CD8-positive, alpha-beta memory T cell (primary cell): ENCODE measurements at regions of chr19 and their contacts with region 1.

Region 1: DNA sequence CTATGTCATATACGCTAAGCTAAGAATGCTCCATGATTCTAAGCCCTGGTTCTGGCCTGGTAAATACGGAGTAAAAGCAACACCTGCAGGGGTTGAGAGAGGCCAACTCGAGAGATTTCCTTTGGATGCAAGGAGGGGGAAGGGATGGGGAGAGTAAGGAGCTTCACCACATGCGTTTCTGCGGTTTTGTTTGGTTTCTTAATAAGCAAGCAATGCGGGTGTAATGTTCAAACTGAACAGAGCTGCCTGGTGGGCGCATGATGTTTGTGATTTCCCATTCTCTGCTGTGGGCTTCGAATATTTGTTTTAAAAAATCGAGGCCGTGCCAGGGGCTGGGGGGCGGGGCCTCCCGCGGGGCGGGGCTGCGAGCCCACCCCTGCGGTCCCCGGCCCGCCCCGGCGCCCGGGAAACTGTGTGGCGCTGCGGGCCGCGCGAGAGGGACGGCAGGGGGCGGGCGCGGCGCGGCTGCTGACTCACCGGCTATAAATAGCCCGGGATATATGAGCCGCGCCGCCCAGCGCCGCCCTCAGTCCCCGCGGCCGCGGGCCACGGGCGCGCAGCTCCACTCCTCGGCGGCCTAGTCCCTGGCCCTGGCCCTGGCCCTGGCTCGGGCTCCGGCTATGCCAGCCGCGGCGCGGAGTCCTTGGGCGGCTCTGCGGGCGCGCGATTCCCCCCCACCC is 5.1 kb downstream of the BBC3 start:
- DNase-seq: peak; percentile 85 to 92 (median 86)
- H3K4me3 ChIP-seq: peak overlapping the region; percentile 74
- H3K4me3 Mint-ChIP-seq: peak overlapping the region; percentile 11 to 92 (median 62)
- H3K27ac ChIP-seq: peak overlapping the region; percentile 94
- H3K27ac Mint-ChIP-seq: peak overlapping the region; percentile 71 to 95 (median 90)
- H3K4me1 ChIP-seq: peaks cover 36% of the 10 kb centered on the region
- H3K4me1 Mint-ChIP-seq: peaks cover 6 to 20% (median 16%) of the 10 kb centered on the region in 3 donors
- H3K27me3 ChIP-seq: no peaks in the 10 kb centered on the region
- H3K27me3 Mint-ChIP-seq: no peaks in the 10 kb centered on the region

Region 2: GRCh38 chr19:47152224-47153017 is 73.5 kb before region 1 on chr19:
- CTCF ChIA-PET with region 1: interaction called, 13 read pairs
- POLR2A ChIA-PET with region 1: interaction called, 11 read pairs
- DNase-seq: no peak
- H3K4me3 ChIP-seq: no peak overlapping the region
- H3K4me3 Mint-ChIP-seq: no peak overlapping the region
- H3K27ac ChIP-seq: no peak overlapping the region
- H3K27ac Mint-ChIP-seq: peak overlapping the region in 2 of 8 donors; percentile 58 to 69
- H3K4me1 ChIP-seq: peaks cover 39% of the 10 kb centered on the region
- H3K4me1 Mint-ChIP-seq: peaks cover 28 to 57% (median 51%) of the 10 kb centered on the region in 3 donors
- H3K27me3 ChIP-seq: no peaks in the 10 kb centered on the region
- H3K27me3 Mint-ChIP-seq: no peaks in the 10 kb centered on the region

Region 3: DNA sequence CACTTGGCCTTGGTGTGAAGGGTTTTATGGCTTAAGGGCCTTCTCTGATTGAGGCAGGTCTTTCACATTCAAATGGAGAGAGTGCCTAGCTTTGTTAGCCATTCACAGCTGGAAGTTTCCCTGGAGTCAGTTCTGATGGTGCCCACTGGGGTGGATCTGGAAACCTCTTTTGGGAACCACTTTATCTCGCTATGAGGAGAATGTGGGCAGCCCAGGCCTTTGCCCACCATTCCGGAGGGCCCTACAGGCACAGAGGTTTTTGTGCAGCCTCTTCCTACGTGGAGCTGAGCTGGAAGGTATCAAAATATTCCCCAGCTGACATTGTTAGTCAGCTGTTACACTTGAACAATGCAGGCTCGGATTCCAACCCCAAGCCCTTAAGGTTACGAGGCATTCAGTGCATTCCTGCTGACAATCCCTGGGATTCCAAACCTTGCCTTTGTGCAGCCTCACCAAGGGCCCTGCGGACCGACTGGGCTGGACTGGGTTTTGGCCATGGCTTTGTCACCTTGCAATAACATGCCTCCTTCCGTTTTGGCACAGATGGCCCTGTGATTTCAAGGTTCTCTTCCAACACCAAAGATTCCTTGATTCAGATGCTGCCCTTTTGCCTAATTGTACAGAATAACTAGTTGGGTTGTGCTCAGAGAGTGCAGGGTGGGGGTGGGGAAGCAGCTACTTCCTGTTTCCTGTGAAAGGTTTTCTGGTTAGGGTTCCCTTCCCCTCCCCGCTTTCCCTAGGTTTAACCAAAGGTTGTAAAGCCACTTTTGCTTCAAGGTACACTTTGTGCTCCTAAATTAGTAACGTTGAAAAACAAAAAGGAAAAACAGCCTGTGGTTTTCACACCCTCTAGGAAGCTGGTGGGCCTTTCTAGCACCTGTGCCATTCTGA is 68.2 kb before region 1 on chr19:
- CTCF ChIA-PET with region 1: interaction called, 3 read pairs
- POLR2A ChIA-PET with region 1: interaction called, 11 read pairs
- DNase-seq: peak in 3 of 5 donors; percentile 21 to 59 (median 45)
- H3K4me3 ChIP-seq: peak overlapping the region; percentile 48
- H3K4me3 Mint-ChIP-seq: peak overlapping the region; percentile 62 to 84 (median 80)
- H3K27ac ChIP-seq: peak overlapping the region; percentile 2
- H3K27ac Mint-ChIP-seq: peak overlapping the region; percentile 73 to 98 (median 93)
- H3K4me1 ChIP-seq: peaks cover 69% of the 10 kb centered on the region
- H3K4me1 Mint-ChIP-seq: peaks cover 50 to 78% (median 68%) of the 10 kb centered on the region in 3 donors
- H3K27me3 ChIP-seq: no peaks in the 10 kb centered on the region
- H3K27me3 Mint-ChIP-seq: no peaks in the 10 kb centered on the region

Region 4: DNA sequence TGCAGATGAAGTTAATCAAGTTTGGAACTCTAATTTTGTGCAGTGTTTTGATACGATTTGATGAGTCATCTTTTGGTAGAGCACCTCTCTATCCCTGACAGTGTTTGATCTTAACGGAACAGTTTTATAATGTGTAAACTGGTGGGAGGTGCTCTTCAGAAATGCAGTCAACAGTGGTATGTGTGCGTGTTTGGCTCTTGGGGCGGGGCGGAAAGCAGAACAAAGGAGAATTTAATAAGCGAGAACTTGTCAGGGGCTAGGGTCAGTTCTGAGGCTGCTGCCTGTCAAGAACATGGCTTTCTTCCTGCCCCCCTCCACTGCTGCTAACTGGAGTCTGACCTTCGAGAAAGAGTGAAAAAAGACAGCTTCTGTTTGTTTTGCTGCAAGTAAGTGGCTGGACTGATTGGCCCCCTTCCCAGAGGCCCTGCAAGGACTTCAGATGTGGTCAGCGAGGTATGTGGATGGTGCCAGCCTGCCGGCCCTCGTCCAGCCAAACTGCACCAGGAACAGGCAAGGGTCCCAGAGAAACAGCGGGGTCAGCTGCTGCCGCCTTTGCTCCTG is 35.6 kb before region 1 on chr19:
- CTCF ChIA-PET with region 1: interaction called, 12 read pairs
- POLR2A ChIA-PET with region 1: interaction called, 21 read pairs
- DNase-seq: peak in 3 of 5 donors; percentile 39 to 67 (median 67)
- H3K4me3 ChIP-seq: no peak overlapping the region
- H3K4me3 Mint-ChIP-seq: peak overlapping the region; percentile 2 to 55 (median 33)
- H3K27ac ChIP-seq: no peak overlapping the region
- H3K27ac Mint-ChIP-seq: peak overlapping the region; percentile 48 to 91 (median 70)
- H3K4me1 ChIP-seq: peaks cover 72% of the 10 kb centered on the region
- H3K4me1 Mint-ChIP-seq: peaks cover 41 to 69% (median 55%) of the 10 kb centered on the region in 3 donors
- H3K27me3 ChIP-seq: no peaks in the 10 kb centered on the region
- H3K27me3 Mint-ChIP-seq: no peaks in the 10 kb centered on the region

Region 5: GRCh38 chr19:47210689-47211316 is 15.1 kb before region 1 on chr19:
- CTCF ChIA-PET with region 1: interaction called, 33 read pairs
- POLR2A ChIA-PET with region 1: interaction called, 21 read pairs
- DNase-seq: peak; percentile 66 to 83 (median 73)
- H3K4me3 ChIP-seq: no peak overlapping the region
- H3K4me3 Mint-ChIP-seq: no peak overlapping the region
- H3K27ac ChIP-seq: peak overlapping the region; percentile 53
- H3K27ac Mint-ChIP-seq: peak overlapping the region in 7 of 8 donors; percentile 20 to 82 (median 55)
- H3K4me1 ChIP-seq: peaks cover 11% of the 10 kb centered on the region
- H3K4me1 Mint-ChIP-seq: peaks cover 6 to 9% (median 6%) of the 10 kb centered on the region in 3 donors
- H3K27me3 ChIP-seq: no peaks in the 10 kb centered on the region
- H3K27me3 Mint-ChIP-seq: no peaks in the 10 kb centered on the region

Region 6: DNA sequence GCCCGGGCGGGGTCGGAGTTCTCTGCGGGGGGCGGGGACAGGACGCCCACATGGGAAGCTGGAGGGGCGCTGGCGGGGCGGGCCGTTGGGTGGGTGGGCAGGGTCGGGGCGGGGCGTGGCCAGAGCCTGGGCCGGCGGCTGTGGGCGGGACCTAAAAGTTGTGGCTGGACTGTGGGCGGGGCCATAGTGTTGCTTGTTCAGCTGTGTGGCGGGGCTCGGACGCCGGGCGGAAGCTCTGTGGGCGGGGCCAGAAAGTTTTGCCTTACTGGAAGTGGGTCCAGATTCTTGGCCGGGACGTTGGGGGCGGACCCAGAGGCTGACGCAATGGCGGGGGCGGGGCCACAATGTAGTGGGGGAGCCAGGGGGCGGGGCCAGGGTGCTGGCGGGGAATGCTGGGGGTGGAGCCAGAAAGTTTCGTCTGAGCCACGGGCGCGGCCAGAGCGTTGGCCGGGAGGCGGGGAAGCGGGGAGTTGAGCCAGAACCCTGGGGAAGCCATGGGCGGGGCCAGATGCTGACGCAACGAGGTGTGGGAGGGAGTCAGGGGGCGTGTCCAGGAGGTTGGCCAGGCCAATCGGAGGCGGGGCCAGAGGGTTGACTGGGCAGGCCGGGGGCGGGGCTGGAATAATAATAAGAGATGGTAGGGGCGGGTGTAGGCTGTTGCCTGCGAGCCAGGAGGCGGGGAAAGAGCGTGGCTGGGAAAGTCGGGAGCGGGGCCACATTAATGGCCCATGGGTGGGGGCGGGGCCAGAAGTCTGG is 31.0 kb after region 1 on chr19:
- CTCF ChIA-PET with region 1: interaction called, 334 read pairs
- POLR2A ChIA-PET with region 1: interaction called, 20 read pairs
- DNase-seq: peak; percentile 96 to 99 (median 98)
- H3K4me3 ChIP-seq: peak overlapping the region; percentile 61
- H3K4me3 Mint-ChIP-seq: peak overlapping the region; percentile 81 to 93 (median 90)
- H3K27ac ChIP-seq: peak overlapping the region; percentile 84
- H3K27ac Mint-ChIP-seq: peak overlapping the region; percentile 92 to 97 (median 96)
- H3K4me1 ChIP-seq: peaks cover 23% of the 10 kb centered on the region
- H3K4me1 Mint-ChIP-seq: peaks cover 34 to 47% (median 37%) of the 10 kb centered on the region in 3 donors
- H3K27me3 ChIP-seq: no peaks in the 10 kb centered on the region
- H3K27me3 Mint-ChIP-seq: peaks cover 0 to 1% of the 10 kb centered on the region in 2 donors

Region 7: GRCh38 chr19:47273313-47273977 is 47.6 kb after region 1 on chr19:
- CTCF ChIA-PET with region 1: interaction called, 3 read pairs
- POLR2A ChIA-PET with region 1: interaction called, 12 read pairs
- DNase-seq: peak; percentile 82 to 92 (median 86)
- H3K4me3 ChIP-seq: peak overlapping the region; percentile 93
- H3K4me3 Mint-ChIP-seq: peak overlapping the region; percentile 96 to 99 (median 97)
- H3K27ac ChIP-seq: peak overlapping the region; percentile 97
- H3K27ac Mint-ChIP-seq: peak overlapping the region; percentile 97 to 100 (median 98)
- H3K4me1 ChIP-seq: peaks cover 15% of the 10 kb centered on the region
- H3K4me1 Mint-ChIP-seq: peaks cover 18 to 28% (median 24%) of the 10 kb centered on the region in 3 donors
- H3K27me3 ChIP-seq: no peaks in the 10 kb centered on the region
- H3K27me3 Mint-ChIP-seq: no peaks in the 10 kb centered on the region